Left ventricle myocardium superior (tissue), 1 donor: ENCODE measurements at regions of chr13 and their contacts with region 1.

Region 1: DNA sequence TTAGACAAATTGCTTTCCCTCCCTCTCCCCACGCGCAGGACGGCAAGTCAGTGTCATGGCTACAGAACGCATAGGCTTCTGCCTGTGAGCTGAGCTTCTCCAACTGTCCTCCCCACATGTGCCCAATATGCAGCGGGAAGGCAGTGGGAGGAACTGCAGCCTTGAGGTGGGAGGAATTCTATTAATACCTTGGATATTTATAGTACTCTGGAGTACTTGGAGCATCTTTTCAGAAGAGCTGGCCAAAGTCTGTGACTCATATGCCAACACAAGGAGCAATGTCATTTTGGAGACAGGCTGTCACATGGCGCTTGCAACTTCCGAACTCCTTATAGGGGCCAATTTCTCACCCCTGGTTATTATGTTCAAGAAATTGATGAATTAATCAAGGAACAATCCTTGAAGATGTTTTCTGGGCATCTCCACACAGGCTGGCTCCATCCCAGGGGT is 245.0 kb upstream of the SERP2 start:
- DNase-seq: peak; percentile 44
- ATAC-seq: peak; percentile 90

Region 2: GRCh38 chr13:44058624-44059215 is 69.9 kb before region 1 on chr13:
- intact Hi-C with region 1: loop called (anchors 5 kb)
- DNase-seq: no peak
- ATAC-seq: peak; percentile 49